A549 (cell line): ENCODE measurements at regions of chrX and their contacts with region 1.

Region 1: DNA sequence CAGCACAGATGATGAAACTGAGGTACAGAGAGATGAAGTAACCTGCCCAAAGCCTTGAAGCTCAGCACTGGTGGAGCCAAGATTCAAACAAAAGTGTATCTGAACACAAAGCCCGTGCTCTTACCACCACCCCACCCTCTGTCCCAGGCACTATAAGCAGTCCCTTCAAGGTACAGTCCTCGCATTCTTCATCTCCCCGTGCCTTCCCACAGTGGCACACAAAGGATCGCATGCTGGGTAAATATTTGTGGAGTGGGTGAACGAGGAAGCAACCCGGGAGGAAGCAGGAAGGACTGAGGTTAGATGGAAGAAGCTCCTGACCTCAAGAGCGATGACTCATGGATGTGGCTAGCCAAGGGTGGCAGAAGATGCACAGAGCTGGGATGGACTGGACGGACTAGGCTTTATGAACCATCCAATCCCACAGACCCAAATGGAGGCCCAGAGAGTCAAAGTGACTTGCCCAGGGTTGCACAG is 18.4 kb downstream of the IQSEC2 start:
- DNase-seq: peak; percentile 61 to 78
- ATAC-seq: peak; percentile 72 to 82
- H3K4me3 ChIP-seq: peak overlapping the region; percentile 32; the same call in 1 of the 3 replicates
- H3K27ac ChIP-seq: peak overlapping the region; percentile 92 to 99
- H3K4me1 ChIP-seq: peaks cover 71% of the 10 kb centered on the region
- CTCF ChIP-seq: no peak
- EP300 ChIP-seq: peak in 1 of 2 experiments; percentile 16; a peak in 1 of 5 replicates
- POLR2A ChIP-seq: no peak
- RAD21 ChIP-seq: no peak

Region 2: GRCh38 chrX:53251307-53251706 is 11.6 kb before region 1 on chrX:
- CTCF ChIA-PET with region 1: interaction called, 12 read pairs
- POLR2A ChIA-PET with region 1: interaction called, 3 read pairs
- DNase-seq: no peak
- ATAC-seq: no peak
- H3K4me3 ChIP-seq: no peak overlapping the region
- H3K27ac ChIP-seq: peak overlapping the region in 1 of 2 experiments; percentile 67; a peak in 1 of 6 replicates
- H3K4me1 ChIP-seq: peaks cover 15% of the 10 kb centered on the region; the same call in 2 of the 3 replicates
- CTCF ChIP-seq: no peak
- EP300 ChIP-seq: no peak
- POLR2A ChIP-seq: no peak
- RAD21 ChIP-seq: no peak

Region 3: GRCh38 chrX:53357799-53358530 is 95.0 kb after region 1 on chrX:
- CTCF ChIA-PET with region 1: no interaction called
- POLR2A ChIA-PET with region 1: no interaction called
- DNase-seq: peak in 1 of 2 experiments; percentile 36
- ATAC-seq: no peak
- H3K4me3 ChIP-seq: no peak overlapping the region
- H3K27ac ChIP-seq: no peak overlapping the region
- H3K4me1 ChIP-seq: no peaks in the 10 kb centered on the region
- CTCF ChIP-seq: no peak
- EP300 ChIP-seq: no peak
- POLR2A ChIP-seq: no peak
- RAD21 ChIP-seq: no peak